ENCODE measurements at regions of chr17 and their contacts with region 1.

Region 1: DNA sequence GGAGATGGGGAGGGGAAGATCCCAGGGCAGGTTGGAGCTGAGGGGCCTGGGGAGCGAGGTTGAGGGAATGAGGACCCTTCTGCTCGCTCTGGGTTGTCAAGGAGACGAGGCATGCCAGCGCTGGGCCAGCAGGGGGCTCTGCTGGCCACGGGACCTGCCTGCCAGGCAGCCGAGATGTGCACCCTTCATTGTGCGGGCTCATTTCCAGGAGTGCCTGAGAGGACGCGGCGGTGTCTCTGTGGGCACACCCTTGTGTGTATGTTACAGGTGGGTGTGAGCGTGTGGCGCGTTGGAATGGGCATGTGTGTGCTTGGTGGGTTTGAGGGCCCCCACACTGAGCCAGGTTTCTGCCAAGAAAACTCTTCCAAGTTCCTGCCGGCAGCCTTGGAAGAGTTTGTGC is 15.9 kb downstream of the ARHGAP23 start:
- H3K4me3 ChIP-seq: no peak overlapping the region
- H3K27ac ChIP-seq: no peak overlapping the region
- H3K4me1 ChIP-seq: no peaks in the 10 kb centered on the region
- CTCF ChIP-seq: peak; percentile 94

Region 2: GRCh38 chr17:38400286-38400685 is 43.9 kb before region 1 on chr17:
- CTCF ChIA-PET with region 1: no interaction called
- POLR2A ChIA-PET with region 1: no interaction called
- H3K4me3 ChIP-seq: no peak overlapping the region
- H3K27ac ChIP-seq: no peak overlapping the region
- H3K4me1 ChIP-seq: peaks cover 7% of the 10 kb centered on the region; the same call in 1 of the 2 replicates
- CTCF ChIP-seq: no peak

Region 3: GRCh38 chr17:38430316-38430715 is 13.8 kb before region 1 on chr17:
- CTCF ChIA-PET with region 1: interaction called, 52 read pairs
- POLR2A ChIA-PET with region 1: no interaction called
- H3K4me3 ChIP-seq: no peak overlapping the region
- H3K27ac ChIP-seq: no peak overlapping the region
- H3K4me1 ChIP-seq: peaks cover 3% of the 10 kb centered on the region
- CTCF ChIP-seq: no peak

Region 4: DNA sequence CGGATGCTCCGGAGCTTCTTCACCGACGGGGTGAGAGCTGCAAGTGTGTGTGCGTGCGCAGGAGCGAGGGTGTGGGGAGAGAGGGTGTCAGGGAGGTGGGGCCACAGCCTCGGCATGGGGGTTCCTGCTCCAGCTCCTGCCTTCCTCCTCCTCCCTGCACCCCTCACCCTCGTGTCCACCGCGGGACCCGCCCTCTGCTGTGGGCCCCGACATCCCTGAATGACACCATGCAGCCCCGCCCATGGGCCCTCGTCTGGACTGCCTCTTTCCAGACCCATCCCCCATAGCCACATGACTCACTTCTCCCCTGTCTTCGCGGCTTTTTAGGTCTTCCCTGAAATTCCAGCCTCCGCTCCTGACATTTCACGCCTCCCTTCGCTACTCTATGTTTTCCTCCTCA is 25.7 kb after region 1 on chr17:
- CTCF ChIA-PET with region 1: interaction called, 16 read pairs
- POLR2A ChIA-PET with region 1: interaction called, 6 read pairs
- H3K4me3 ChIP-seq: no peak overlapping the region
- H3K27ac ChIP-seq: no peak overlapping the region
- H3K4me1 ChIP-seq: peaks cover 8% of the 10 kb centered on the region; the same call in 1 of the 2 replicates
- CTCF ChIP-seq: no peak

Region 5: DNA sequence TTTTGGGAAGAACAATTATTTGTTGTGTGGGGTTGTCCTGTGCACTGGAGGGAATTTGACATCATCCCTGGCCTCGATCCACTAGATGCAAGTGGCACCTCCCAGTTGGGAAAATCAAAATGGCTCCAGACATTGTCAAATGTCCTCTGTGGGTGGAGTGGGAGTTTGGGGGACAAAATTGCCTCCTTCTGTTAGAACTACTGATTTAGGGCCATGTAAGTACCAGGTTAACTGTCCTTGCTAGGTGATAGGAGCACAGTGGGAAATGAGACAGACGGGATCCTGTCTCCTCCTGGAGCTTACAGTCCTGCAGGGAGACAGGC is 41.0 kb after region 1 on chr17:
- CTCF ChIA-PET with region 1: interaction called, 10 read pairs
- POLR2A ChIA-PET with region 1: interaction called, 3 read pairs
- H3K4me3 ChIP-seq: no peak overlapping the region
- H3K27ac ChIP-seq: no peak overlapping the region
- H3K4me1 ChIP-seq: no peaks in the 10 kb centered on the region
- CTCF ChIP-seq: no peak

Region 6: DNA sequence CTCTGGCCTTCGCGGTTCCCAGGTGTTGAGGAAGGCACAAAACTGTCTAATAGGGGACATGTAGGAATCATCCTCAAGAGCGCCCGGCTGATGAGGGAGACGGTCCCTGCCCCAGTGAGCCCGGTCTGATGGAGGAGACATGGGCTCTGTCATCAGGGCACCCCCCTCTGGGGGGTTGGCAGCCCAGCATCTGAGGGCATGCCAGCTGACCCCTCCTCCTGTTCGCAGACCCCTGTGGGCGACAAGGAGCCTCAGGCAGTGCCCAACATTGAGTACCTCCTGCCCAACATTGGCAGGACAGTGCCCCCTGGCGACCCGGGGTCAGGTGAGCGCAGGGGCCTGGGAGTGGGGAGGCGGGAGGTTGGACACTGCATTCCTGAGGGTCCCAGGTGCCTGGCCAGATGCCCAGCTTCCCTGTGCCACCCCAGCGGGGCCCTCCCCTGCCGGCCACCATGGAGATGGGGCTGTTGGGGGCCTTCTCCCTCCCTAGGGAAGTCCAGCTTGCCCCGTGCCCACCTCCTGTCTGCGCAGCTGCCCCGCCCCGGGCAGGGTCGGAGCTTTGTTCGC is 54.1 kb after region 1 on chr17:
- CTCF ChIA-PET with region 1: no interaction called
- POLR2A ChIA-PET with region 1: no interaction called
- H3K4me3 ChIP-seq: no peak overlapping the region
- H3K27ac ChIP-seq: no peak overlapping the region
- H3K4me1 ChIP-seq: no peaks in the 10 kb centered on the region
- CTCF ChIP-seq: no peak

Measured in HEK293 (cell line).